A549 (cell line): ENCODE measurements at regions of chr17 and their contacts with region 1.

Region 1: DNA sequence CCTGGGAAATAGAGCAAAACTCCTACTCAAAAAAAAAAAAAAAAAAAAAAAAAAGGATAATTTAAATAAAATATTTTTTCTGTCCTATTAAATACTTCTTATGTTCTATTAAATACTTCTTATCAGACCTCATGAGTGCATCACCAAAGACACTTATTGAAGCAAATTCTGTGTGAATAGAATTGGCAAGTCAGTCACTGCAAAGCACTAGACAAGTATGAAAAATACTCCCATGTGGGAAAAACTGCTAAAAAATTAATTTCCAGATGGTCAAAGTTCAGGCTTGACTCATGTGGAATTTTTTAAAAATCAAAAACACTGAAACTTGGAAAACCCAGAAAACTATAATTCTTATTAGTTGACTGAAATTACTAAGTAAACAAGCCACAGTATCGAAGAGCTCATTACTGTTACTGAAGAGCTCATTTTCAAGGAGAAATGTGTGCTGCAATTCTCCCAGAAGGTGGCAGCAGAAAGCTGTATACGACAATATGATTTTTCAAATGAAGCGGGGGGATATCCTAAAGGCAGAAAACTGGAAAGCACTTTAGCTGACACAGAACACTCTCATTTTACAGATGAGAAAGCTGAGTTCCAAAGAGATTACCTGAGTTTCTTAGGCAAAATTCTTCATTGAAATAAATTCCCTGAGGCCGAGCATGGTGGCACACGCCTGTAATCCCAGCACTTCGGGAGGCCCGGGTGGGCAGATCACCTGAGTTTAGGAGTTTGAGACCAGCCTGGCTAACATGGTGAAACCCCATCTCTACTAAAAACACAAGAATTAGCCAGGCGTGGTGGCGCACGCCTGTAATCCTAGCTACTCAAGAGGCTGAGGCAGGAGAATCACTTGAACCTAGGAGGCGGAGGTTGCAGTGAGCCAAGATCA is 15.9 kb upstream of the FBXO47 start:
- DNase-seq: peak; percentile 79
- ATAC-seq: peak; percentile 86 to 88; a peak in 5 of 6 replicates
- H3K4me3 ChIP-seq: no peak overlapping the region
- H3K27ac ChIP-seq: no peak overlapping the region
- H3K4me1 ChIP-seq: no peaks in the 10 kb centered on the region
- CTCF ChIP-seq: peak; percentile 97
- EP300 ChIP-seq: no peak
- POLR2A ChIP-seq: no peak
- RAD21 ChIP-seq: peak; percentile 94 to 96

Region 2: DNA sequence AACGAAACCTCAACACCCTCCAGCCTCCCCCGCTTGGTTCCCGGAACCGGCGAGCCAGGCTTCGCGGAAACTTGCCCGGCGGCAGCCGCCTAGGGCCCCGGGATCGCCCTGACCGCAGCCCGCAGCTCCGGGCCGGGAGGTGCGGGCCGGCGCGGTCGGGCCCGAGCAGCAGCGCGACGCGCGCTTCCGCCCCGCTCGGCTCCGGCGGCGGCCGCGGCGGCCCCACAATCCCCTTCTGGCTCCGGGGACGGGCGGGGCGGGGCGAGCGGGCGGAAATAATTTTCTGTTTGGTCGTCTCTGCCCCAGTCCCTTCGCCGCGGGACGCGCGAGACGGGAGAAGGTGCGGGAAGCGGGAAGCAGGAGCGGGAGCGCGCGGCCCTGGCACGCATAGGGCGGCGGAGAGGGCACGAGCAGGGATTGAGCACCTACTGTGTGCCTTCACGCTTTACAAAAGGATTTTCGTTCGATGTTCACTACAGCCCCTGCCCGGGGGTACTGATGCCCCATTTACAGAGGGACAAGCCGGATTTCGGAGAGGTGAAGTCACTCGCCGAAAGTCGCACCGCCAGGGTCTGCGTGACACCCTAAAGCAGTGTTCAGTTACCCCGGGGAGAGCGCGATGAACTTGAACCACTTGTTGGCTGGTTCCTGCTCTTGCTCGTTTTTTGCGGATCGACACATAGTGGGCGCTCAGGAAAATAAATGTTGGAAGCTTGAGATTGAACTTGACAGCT is 280.8 kb before region 1 on chr17:
- CTCF ChIA-PET with region 1: no interaction called
- POLR2A ChIA-PET with region 1: no interaction called
- DNase-seq: peak; percentile 90 to 94
- ATAC-seq: peak; percentile 67 to 78
- H3K4me3 ChIP-seq: peak overlapping the region; percentile 56
- H3K27ac ChIP-seq: peak overlapping the region; percentile 84 to 96
- H3K4me1 ChIP-seq: peaks cover 47% of the 10 kb centered on the region
- CTCF ChIP-seq: no peak
- EP300 ChIP-seq: no peak; a peak in 1 of 5 replicates
- POLR2A ChIP-seq: peak; percentile 85
- RAD21 ChIP-seq: no peak

Region 3: GRCh38 chr17:38967290-38967738 is 15.8 kb before region 1 on chr17 and contains the start of gene FBXO47:
- CTCF ChIA-PET with region 1: interaction called, 61 read pairs
- POLR2A ChIA-PET with region 1: interaction called, 7 read pairs
- DNase-seq: peak; percentile 92 to 98
- ATAC-seq: peak; percentile 98 to 99
- H3K4me3 ChIP-seq: peak within 1 kb of the TSS; percentile 44
- H3K27ac ChIP-seq: peak within 1 kb of the TSS; percentile 78 to 84
- H3K4me1 ChIP-seq: peaks cover 9% of the 10 kb centered on the region; the same call in 2 of the 3 replicates
- CTCF ChIP-seq: no peak
- EP300 ChIP-seq: no peak
- POLR2A ChIP-seq: peak; percentile 61
- RAD21 ChIP-seq: 0 out of 5 replicates have a peak, but pooled peaks of 1 of the 2 experiments have one; percentile 17
- polyA plus RNA-seq, gene FBXO47: 0.04 TPM in 1 of 2 replicates, not detected in the other

Region 4: GRCh38 chr17:39014044-39014794 is 31.1 kb after region 1 on chr17:
- CTCF ChIA-PET with region 1: interaction called, 12 read pairs
- POLR2A ChIA-PET with region 1: no interaction called
- DNase-seq: peak in 1 of 2 experiments; percentile 51
- ATAC-seq: peak in 1 of 2 experiments; percentile 48; a peak in 2 of 6 replicates
- H3K4me3 ChIP-seq: no peak overlapping the region
- H3K27ac ChIP-seq: peak overlapping the region; percentile 59 to 79
- H3K4me1 ChIP-seq: peaks cover 18% of the 10 kb centered on the region
- CTCF ChIP-seq: no peak
- EP300 ChIP-seq: no peak
- POLR2A ChIP-seq: no peak
- RAD21 ChIP-seq: no peak

Region 5: DNA sequence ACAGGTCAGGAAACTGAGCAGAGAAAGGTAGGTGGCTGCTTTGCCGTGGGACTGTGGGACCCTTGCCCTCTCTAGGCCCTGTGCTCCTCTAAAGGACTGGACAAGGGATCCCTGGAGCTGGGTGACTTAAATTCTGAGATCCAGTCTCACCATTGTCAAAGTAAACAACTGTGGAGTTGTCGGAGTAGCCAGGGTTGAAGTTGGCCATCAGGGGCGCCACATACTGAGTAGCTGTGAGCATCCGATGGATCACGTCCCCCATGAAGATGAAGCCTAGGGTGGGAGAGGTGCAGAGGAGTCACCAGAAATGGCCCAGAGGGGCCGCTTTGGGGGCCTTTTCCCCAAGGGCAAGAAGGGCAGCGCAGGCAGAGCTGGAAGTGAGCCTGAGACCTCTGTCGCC is 124.9 kb after region 1 on chr17:
- CTCF ChIA-PET with region 1: interaction called, 11 read pairs
- POLR2A ChIA-PET with region 1: no interaction called
- DNase-seq: no peak
- ATAC-seq: peak in 1 of 2 experiments; percentile 46; a peak in 3 of 6 replicates
- H3K4me3 ChIP-seq: no peak overlapping the region
- H3K27ac ChIP-seq: no peak overlapping the region
- H3K4me1 ChIP-seq: no peaks in the 10 kb centered on the region
- CTCF ChIP-seq: no peak
- EP300 ChIP-seq: no peak
- POLR2A ChIP-seq: no peak
- RAD21 ChIP-seq: no peak

Region 6: DNA sequence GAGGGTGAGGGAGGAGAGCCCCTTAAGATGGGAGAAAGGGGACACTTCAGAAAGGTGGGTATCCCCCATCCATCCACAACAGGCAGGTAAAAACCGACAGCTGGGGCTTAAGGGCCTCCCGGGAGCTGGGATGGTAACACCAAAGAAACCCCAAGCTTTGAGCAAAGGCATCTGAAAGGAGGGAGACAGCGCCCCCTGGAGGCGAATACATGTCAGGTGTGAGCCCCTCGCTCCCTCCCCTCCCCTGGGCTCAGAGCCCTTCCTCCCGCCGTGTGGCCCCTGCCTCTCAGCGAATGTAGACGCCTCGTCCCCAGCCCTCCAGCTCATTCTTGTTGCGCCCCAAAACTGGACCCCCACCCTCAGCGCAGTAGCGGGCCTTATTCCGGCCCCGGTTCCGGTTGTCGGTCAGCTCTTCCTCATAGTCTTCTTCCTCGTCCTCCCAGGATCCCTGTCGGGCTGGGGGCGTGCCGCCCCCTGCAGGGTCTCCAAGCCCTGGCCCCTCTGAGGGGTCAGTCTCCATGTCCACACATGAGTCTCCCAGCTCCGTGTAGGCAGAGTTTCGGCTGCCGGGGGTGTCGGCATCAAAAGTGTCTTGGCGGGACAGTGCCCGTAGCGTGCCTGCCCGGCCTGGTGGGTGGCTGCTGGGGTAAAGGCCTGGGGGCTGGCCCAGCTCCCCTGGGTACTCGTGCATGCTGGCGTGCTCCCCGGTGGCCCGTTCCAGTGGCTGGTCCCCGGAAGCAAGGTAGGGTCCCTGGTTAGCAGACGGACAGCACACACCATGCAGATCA is 192.0 kb after region 1 on chr17:
- CTCF ChIA-PET with region 1: interaction called, 38 read pairs
- POLR2A ChIA-PET with region 1: no interaction called
- DNase-seq: peak; percentile 79 to 90
- ATAC-seq: peak; percentile 64 to 86; a peak in 5 of 6 replicates
- H3K4me3 ChIP-seq: no peak overlapping the region
- H3K27ac ChIP-seq: no peak overlapping the region
- H3K4me1 ChIP-seq: peaks cover 12% of the 10 kb centered on the region
- CTCF ChIP-seq: peak; percentile 90
- EP300 ChIP-seq: no peak
- POLR2A ChIP-seq: no peak
- RAD21 ChIP-seq: peak; percentile 58 to 71